Pancreas (tissue), 10 donors: ENCODE measurements at regions of chr3 and their contacts with region 1.

Region 1: GRCh38 chr3:49839193-49839809 is 17.1 kb downstream of the TRAIP start:
- DNase-seq: peak; percentile 59 to 87 (median 76)
- ATAC-seq: peak; percentile 84 to 98 (median 95)
- H3K4me3 ChIP-seq: no peak overlapping the region
- H3K27ac ChIP-seq: no peak overlapping the region
- H3K4me1 ChIP-seq: no peaks in the 10 kb centered on the region
- H3K27me3 ChIP-seq: no peaks in the 10 kb centered on the region
- CTCF ChIP-seq: peak; percentile 69 to 79 (median 76)

Region 2: GRCh38 chr3:49512771-49513358 is 326.4 kb before region 1 on chr3:
- intact Hi-C with region 1: no loop called
- DNase-seq: no peak
- ATAC-seq: peak; percentile 59 to 85 (median 72)
- H3K4me3 ChIP-seq: no peak overlapping the region
- H3K27ac ChIP-seq: peak overlapping the region in 2 of 4 donors; percentile 39 to 42
- H3K4me1 ChIP-seq: peaks cover 17 to 19% (median 18%) of the 10 kb centered on the region in 3 donors
- H3K27me3 ChIP-seq: no peaks in the 10 kb centered on the region
- CTCF ChIP-seq: no peak

Region 3: GRCh38 chr3:49553692-49554632 is 285.3 kb before region 1 on chr3 and contains the start of gene BSN:
- intact Hi-C with region 1: no loop called
- DNase-seq: peak; percentile 90 to 99 (median 94)
- ATAC-seq: peak; percentile 95 to 98 (median 96)
- H3K4me3 ChIP-seq: peak within 1 kb of the TSS; percentile 63 to 78 (median 72)
- H3K27ac ChIP-seq: peak within 1 kb of the TSS in 3 of 4 donors; percentile 4 to 62 (median 34)
- H3K4me1 ChIP-seq: peaks cover 0 to 4% (median 0%) of the 10 kb centered on the region in 3 donors
- H3K27me3 ChIP-seq: no peaks in the 10 kb centered on the region
- CTCF ChIP-seq: no peak
- total RNA-seq, gene BSN: 0.56 to 1.2 (median 0.85) TPM

Region 4: DNA sequence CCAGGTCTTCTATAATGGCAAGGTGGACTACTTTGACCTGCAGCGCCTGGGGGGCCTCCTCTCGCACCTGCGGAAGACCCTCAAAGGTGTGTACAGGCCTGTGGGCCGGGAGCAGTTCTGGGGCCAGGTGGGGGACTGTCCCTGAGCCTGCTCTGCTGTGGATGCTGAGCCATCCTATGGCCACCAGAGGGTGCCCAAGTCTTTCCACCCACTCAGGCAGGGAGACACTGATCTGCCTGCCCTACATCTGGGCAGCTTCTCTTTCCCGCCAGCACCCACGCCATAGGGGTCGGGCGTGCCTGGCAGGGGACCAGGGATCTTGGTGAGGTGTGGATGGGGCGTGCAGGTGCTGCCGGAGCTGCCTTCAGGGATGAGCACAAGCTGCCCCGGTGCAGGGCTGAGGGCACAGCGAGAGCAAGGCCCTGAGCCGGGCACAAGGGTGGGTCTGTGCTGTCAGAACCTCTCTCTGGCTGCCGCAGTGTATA is 135.8 kb before region 1 on chr3:
- intact Hi-C with region 1: loop called in 2 of 3 experiments (anchors 5 to 10 kb)
- DNase-seq: peak in 4 of 6 donors; percentile 53 to 79 (median 72)
- ATAC-seq: peak; percentile 81 to 96 (median 91)
- H3K4me3 ChIP-seq: no peak overlapping the region
- H3K27ac ChIP-seq: no peak overlapping the region
- H3K4me1 ChIP-seq: no peaks in the 10 kb centered on the region
- H3K27me3 ChIP-seq: no peaks in the 10 kb centered on the region
- CTCF ChIP-seq: peak; percentile 73 to 86 (median 82)

Region 5: GRCh38 chr3:49802719-49803464 is 36.4 kb before region 1 on chr3 and contains the start of gene INKA1:
- intact Hi-C with region 1: loop called in 2 of 3 experiments (anchors 5 kb)
- DNase-seq: peak; percentile 82 to 96 (median 90)
- ATAC-seq: peak; percentile 85 to 94 (median 92)
- H3K4me3 ChIP-seq: peak within 1 kb of the TSS; percentile 55 to 97 (median 75)
- H3K27ac ChIP-seq: peak within 1 kb of the TSS; percentile 39 to 57 (median 41)
- H3K4me1 ChIP-seq: peaks cover 0 to 21% (median 20%) of the 10 kb centered on the region in 3 donors
- H3K27me3 ChIP-seq: no peaks in the 10 kb centered on the region
- CTCF ChIP-seq: peak in 3 of 4 donors; percentile 16 to 85 (median 82)
- total RNA-seq, gene INKA1: 0.55 to 1.4 (median 0.62) TPM